A673 (cell line): ENCODE measurements at regions of chrX and their contacts with region 1.

Region 1: DNA sequence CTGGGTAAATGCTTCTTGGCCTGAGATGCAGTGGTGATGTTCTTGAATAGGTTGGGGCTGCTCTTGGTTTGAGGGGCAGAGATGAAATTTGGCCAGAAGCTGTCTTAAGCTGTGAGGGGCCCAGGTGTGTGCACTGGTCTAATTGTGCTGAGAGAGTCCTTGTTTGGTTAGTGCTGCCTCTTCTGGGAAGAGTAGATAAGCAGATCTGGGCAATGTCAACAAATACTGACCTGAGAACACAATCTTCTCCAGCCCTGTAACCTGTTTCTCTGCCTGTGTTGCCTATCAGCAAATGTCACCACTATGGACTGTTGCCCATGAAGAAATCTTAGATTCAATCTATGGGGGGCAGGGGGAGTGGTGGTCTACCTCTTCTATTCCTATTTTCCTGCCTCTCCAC is 17.2 kb upstream of the USP27X start:
- DNase-seq: no peak
- H3K4me3 ChIP-seq: no peak overlapping the region
- H3K27ac ChIP-seq: no peak overlapping the region
- H3K4me1 ChIP-seq: no peaks in the 10 kb centered on the region
- H3K27me3 ChIP-seq: no peaks in the 10 kb centered on the region
- CTCF ChIP-seq: no peak

Region 2: GRCh38 chrX:49829016-49829415 is 33.1 kb before region 1 on chrX and contains the start of gene PAGE4:
- CTCF ChIA-PET with region 1: no interaction called
- POLR2A ChIA-PET with region 1: interaction called, 17 read pairs
- intact Hi-C with region 1: no loop called
- DNase-seq: peak; percentile 10
- H3K4me3 ChIP-seq: no peak within 1 kb of the TSS
- H3K27ac ChIP-seq: no peak within 1 kb of the TSS
- H3K4me1 ChIP-seq: no peaks in the 10 kb centered on the region
- H3K27me3 ChIP-seq: peaks cover 17% of the 10 kb centered on the region
- CTCF ChIP-seq: no peak
- total RNA-seq, gene PAGE4: not detected in 2 replicates

Region 3: GRCh38 chrX:50121093-50121492 is 259.0 kb after region 1 on chrX:
- CTCF ChIA-PET with region 1: no interaction called
- POLR2A ChIA-PET with region 1: no interaction called
- intact Hi-C with region 1: no loop called
- DNase-seq: no peak
- H3K4me3 ChIP-seq: no peak overlapping the region
- H3K27ac ChIP-seq: no peak overlapping the region
- H3K4me1 ChIP-seq: no peaks in the 10 kb centered on the region
- H3K27me3 ChIP-seq: no peaks in the 10 kb centered on the region
- CTCF ChIP-seq: no peak